ENCODE measurements at regions of chr18 and their contacts with region 1.

Region 1: GRCh38 chr18:10787293-10787901 is 261.6 kb downstream of the NAPG start:
- DNase-seq: peak; percentile 73
- ATAC-seq: peak; percentile 71
- H3K4me3 ChIP-seq: no peak overlapping the region
- H3K27ac ChIP-seq: no peak overlapping the region
- H3K4me1 ChIP-seq: no peaks in the 10 kb centered on the region
- H3K27me3 ChIP-seq: no peaks in the 10 kb centered on the region
- CTCF ChIP-seq: peak; percentile 76
- EP300 ChIP-seq: no peak
- POLR2A ChIP-seq: no peak
- RAD21 ChIP-seq: peak; percentile 38; the same call in 1 of the 2 replicates

Region 2: DNA sequence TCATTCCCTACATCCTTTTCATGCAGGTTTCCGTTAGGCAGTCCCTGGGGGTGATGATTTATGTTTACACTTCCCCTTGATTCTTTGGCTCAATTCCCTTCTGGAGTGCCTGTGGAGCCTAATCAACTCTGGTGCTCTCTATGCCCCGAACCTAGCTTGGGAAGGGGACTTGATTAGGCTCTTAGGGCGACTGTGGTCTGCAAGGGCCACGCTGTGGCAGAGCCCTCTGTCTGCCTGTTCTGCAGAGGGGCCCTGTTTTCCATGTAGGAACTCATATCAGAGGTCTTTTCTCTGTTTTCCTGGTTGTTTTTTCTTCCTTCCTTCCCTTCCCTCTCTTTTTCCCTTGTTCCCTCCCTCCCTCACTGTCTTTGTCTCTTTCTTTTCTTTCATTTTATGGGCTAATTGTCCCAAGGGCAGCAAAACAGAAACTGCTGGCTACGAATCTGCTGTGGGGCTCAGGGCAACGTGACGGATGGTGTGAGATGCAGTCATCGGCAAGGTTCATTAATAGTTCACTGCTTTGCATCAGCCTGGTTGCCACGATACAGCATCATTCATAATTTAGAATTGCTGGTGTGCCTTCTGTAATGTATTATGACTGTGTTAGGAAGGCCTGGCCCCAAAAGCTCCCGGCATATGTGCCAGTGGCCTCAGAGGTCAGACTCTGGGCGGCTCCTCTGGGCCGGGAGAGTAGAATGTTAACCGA is 127.1 kb before region 1 on chr18:
- CTCF ChIA-PET with region 1: no interaction called
- POLR2A ChIA-PET with region 1: no interaction called
- in situ Hi-C with region 1: no loop called
- intact Hi-C with region 1: no loop called
- DNase-seq: no peak
- ATAC-seq: peak; percentile 50
- H3K4me3 ChIP-seq: no peak overlapping the region
- H3K27ac ChIP-seq: no peak overlapping the region
- H3K4me1 ChIP-seq: peaks cover 8% of the 10 kb centered on the region; the same call in 1 of the 2 replicates
- H3K27me3 ChIP-seq: peaks cover 0 to 13% of the 10 kb centered on the region in 2 experiments; a peak in 2 of 5 replicates
- CTCF ChIP-seq: no peak
- EP300 ChIP-seq: no peak
- POLR2A ChIP-seq: no peak
- RAD21 ChIP-seq: no peak

Region 3: DNA sequence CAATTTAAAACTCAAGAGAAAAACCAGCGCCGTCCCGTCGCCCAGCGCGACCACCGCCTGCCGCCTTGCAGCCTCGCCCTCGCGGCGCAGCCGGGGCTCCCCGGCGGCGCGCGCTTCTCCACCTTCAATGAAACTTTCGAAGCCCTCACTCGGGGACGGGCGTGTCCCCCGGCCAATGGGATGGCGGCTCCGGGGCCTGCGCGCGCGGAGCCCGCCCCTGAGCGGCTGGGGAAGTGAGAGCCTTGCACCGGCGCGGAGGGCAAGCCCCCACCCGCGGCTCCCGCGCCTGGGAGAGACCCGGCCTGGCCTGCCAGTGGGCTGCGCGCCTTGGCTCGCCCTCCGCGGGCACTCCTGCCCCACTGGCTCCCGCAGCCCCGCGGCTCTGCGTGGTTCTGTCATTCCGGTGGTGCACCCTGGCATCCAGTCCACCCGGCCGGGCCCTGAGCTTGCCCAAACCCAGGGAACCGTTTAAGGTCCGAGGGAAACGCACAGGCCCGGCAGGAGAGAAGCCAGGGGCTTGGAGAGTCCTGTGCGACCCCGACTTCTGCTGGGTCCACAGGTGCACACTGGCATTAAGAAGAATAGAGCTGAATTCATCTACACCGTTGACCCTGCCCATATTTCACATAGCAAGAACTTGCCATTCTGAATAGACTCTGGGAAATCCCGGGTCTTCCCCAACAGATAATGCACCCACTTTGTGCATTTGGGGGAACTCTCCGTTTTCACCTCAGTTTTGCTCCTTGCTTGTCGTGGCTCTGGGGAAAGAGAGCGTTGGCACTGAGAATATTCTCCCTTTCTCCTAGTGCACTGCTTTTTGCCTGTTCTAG is 362.3 kb after region 1 on chr18 and contains the start of gene PIEZO2:
- CTCF ChIA-PET with region 1: interaction called, 10 read pairs
- POLR2A ChIA-PET with region 1: no interaction called
- in situ Hi-C with region 1: loop called (anchors 10 kb)
- intact Hi-C with region 1: loop called (anchors 1 kb)
- DNase-seq: peak; percentile 68
- ATAC-seq: peak; percentile 89
- H3K4me3 ChIP-seq: peak within 1 kb of the TSS; percentile 57 to 71 (median 64)
- H3K27ac ChIP-seq: no peak within 1 kb of the TSS
- H3K4me1 ChIP-seq: peaks cover 41% of the 10 kb centered on the region
- H3K27me3 ChIP-seq: 0 out of 5 replicates have a peak, but pooled peaks cover 0 to 3% of the 10 kb centered on the region in 2 experiments
- CTCF ChIP-seq: 0 out of 2 replicates have a peak, but pooled peaks have one; percentile 5
- EP300 ChIP-seq: no peak
- POLR2A ChIP-seq: peak in 1 of 2 experiments; percentile 55; a peak in 3 of 4 replicates
- RAD21 ChIP-seq: no peak
- total RNA-seq, gene PIEZO2: 25.5 and 27.2 TPM in 2 replicates

Region 4: DNA sequence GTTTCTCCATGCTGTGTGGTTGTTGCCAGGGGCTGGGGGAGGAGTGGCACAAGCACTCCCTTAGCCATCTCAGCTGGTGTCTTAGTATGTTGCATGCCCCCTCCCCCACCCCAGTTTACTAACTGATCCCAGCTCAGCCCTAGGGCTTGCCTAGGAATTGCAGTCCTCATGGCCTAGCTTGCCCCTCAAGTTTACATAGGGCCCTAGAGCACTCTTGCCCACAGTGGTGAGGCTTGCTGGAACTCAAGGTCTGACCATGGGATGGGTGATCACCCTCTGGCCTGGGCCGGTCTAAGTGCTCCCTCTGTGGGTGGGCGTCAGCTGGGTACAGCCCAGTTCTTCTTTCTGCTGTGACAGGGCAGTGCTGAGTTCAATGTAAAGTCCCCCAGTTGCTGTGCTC is 518.1 kb after region 1 on chr18:
- CTCF ChIA-PET with region 1: interaction called, 3 read pairs
- POLR2A ChIA-PET with region 1: no interaction called
- in situ Hi-C with region 1: no loop called
- intact Hi-C with region 1: loop called (anchors 1 kb)
- DNase-seq: no peak
- ATAC-seq: peak; percentile 60
- H3K4me3 ChIP-seq: no peak overlapping the region
- H3K27ac ChIP-seq: no peak overlapping the region
- H3K4me1 ChIP-seq: no peaks in the 10 kb centered on the region
- H3K27me3 ChIP-seq: no peaks in the 10 kb centered on the region; a peak in 1 of 5 replicates
- CTCF ChIP-seq: peak; percentile 62
- EP300 ChIP-seq: no peak
- POLR2A ChIP-seq: no peak
- RAD21 ChIP-seq: no peak

Region 5: GRCh38 chr18:11512096-11513030 is 725.0 kb after region 1 on chr18:
- CTCF ChIA-PET with region 1: no interaction called
- POLR2A ChIA-PET with region 1: no interaction called
- in situ Hi-C with region 1: no loop called
- intact Hi-C with region 1: loop called (anchors 2 kb)
- DNase-seq: peak; percentile 68
- ATAC-seq: peak; percentile 91
- H3K4me3 ChIP-seq: no peak overlapping the region
- H3K27ac ChIP-seq: no peak overlapping the region
- H3K4me1 ChIP-seq: peaks cover 27% of the 10 kb centered on the region
- H3K27me3 ChIP-seq: no peaks in the 10 kb centered on the region
- CTCF ChIP-seq: peak; percentile 85
- EP300 ChIP-seq: no peak
- POLR2A ChIP-seq: no peak
- RAD21 ChIP-seq: peak; percentile 87

Region 6: DNA sequence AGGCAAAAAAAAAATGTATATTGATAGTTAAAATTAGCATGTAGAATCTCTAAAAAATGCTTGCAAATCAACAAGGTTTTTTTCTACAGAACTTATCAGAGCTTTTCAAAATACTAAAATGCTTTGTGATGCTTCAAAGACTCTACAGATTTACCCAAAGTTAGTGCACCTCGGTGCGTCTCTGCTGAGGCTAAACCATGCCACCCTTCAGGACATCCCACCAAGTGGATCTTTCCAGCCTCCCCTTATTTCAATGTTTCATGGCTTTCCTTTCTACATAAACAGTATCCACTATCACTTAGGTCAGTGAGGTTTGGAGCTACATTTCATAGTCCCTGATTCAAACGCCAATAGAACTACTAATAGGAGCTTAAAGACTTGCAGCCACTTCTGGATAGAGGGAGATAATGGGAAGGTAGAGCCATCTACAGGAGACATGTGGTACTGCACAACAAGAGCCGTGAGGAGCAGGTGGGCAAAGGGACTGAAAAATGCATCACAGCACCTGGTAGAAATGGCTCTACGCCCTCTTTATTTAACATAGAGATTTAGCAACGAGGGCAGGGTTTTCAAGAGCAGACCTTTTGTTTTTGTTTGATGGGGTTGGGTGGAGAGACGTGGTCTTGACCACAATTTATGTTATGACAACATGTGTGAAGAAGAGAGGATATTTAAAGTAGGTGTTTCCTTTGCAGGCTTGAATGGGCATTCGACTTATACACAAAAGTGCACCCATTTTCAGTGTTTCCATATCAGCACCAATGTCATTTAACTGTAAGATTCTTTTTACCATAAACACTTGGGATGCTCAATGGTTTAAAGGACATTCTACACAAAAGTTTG is 765.9 kb after region 1 on chr18:
- CTCF ChIA-PET with region 1: no interaction called
- POLR2A ChIA-PET with region 1: no interaction called
- in situ Hi-C with region 1: loop called (anchors 25 kb)
- intact Hi-C with region 1: no loop called
- DNase-seq: peak; percentile 49
- ATAC-seq: peak; percentile 79
- H3K4me3 ChIP-seq: no peak overlapping the region
- H3K27ac ChIP-seq: no peak overlapping the region
- H3K4me1 ChIP-seq: no peaks in the 10 kb centered on the region
- H3K27me3 ChIP-seq: peaks cover 1 to 22% of the 10 kb centered on the region in 2 experiments; a peak in 2 of 5 replicates
- CTCF ChIP-seq: peak; percentile 86
- EP300 ChIP-seq: no peak
- POLR2A ChIP-seq: no peak
- RAD21 ChIP-seq: peak; percentile 49

Measured in HepG2 (cell line).